MCF 10A (cell line): ENCODE measurements at regions of chr12 and their contacts with region 1.

Region 1: DNA sequence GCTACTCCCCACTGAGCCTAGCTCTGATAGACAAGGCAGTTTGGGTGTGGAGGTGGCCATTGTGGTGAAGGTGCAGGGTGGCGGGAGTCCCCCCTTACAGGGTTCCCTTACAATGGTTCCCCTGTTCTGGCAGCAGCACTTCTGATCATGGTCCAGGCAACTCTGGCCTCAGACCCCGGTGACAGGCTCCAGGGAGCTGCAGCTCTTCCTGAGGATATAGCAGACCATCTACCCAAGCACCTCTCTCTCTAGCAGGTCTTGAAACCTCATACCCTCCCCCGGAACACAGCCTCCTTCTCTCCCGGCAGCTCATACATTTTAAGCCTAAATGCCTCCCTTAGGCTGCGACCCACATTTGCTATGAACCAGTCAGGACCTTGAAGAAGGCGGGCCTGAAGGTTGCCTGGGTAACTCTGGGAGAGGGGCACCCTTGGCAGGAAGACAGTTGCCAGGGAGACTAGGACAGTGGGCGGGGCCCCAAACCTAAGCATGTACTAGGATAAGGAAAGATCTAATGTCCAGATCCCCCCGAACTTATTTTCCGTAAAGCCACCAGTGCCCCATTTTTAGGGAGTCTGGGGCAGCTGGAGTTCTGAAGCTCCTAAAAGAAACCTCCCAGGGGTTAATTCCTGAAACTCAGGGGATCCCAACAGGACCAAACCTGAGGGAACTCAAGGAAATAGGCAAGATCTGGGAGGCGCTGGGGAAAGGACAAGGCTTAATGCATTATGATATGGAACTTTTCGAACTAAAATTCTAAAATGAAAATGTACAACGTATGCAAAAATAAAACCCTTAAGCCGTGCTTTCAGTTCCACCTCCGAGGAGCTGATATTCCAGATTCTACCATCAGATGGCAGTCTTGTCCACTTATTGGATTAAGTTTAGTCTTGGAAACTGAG is 4.5 kb upstream of the GDF11 start:
- DNase-seq: peak; percentile 86
- H3K4me3 Mint-ChIP-seq: peak overlapping the region; percentile 74
- H3K27ac Mint-ChIP-seq: peak overlapping the region; percentile 73
- H3K4me1 Mint-ChIP-seq: peaks cover 38% of the 10 kb centered on the region
- H3K27me3 Mint-ChIP-seq: peaks cover 17% of the 10 kb centered on the region
- CTCF ChIP-seq: peak; percentile 78

Region 2: DNA sequence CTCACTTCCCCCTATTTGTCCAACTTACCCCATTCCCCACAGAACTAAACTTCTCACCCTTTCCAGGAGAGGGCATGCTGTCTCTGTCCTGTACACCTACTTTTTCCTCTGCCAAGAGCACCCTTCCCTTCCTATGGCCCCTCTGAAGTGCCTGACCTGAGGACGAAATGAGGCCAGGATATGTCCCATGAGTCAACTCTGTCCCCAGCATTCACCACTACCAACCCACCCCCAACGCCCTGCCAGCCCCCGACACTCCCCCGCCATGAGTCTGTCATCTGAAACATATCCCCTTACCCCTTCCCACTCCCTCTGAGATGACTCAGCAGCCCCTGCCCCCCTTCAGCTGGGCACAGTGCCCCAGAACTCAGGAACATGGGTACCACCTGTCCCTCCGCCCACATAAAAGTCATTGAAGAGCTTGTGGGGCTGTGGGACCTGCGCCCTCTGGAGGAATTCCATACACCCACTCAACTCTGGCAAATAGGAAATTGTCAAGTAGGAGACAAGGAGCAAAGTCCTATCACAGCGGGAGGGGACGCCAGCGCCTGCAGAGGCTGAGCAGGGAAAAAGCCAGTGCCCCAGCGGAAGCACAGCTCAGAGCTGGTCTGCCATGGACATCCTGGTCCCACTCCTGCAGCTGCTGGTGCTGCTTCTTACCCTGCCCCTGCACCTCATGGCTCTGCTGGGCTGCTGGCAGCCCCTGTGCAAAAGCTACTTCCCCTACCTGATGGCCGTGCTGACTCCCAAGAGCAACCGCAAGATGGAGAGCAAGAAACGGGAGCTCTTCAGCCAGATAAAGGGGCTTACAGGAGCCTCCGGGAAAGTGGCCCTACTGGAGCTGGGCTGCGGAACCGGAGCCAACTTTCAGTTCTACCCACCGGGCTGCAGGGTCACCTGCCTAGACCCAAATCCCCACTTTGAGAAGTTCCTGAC is 57.0 kb before region 1 on chr12:
- CTCF ChIA-PET with region 1: no interaction called
- POLR2A ChIA-PET with region 1: no interaction called
- intact Hi-C with region 1: loop called (anchors 2 kb)
- DNase-seq: peak; percentile 75
- H3K4me3 Mint-ChIP-seq: no peak overlapping the region
- H3K27ac Mint-ChIP-seq: no peak overlapping the region
- H3K4me1 Mint-ChIP-seq: peaks cover 9% of the 10 kb centered on the region
- H3K27me3 Mint-ChIP-seq: peaks cover 25% of the 10 kb centered on the region
- CTCF ChIP-seq: peak; percentile 37

Region 3: DNA sequence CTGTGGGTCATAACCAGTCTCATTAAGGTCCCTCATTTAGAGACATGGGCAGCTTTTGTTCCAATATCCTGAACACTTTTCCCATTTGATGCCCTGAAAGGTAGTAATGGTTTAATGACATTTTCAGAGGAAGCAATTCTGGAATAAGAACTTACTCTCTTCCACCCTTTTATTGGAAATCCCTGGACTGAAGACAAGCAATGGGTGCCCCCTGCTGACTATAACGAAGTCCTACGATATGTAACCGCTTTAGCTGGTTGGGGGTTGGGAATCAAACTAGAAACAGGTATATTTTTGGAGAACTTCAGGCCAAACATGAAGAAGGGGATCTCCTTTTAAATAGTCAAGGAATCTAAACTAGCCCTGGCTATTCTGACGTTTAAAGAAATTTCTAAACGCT is 58.7 kb after region 1 on chr12:
- CTCF ChIA-PET with region 1: interaction called, 16 read pairs
- POLR2A ChIA-PET with region 1: no interaction called
- intact Hi-C with region 1: loop called (anchors 2 kb)
- DNase-seq: peak; percentile 41
- H3K4me3 Mint-ChIP-seq: no peak overlapping the region
- H3K27ac Mint-ChIP-seq: no peak overlapping the region
- H3K4me1 Mint-ChIP-seq: peaks cover 4% of the 10 kb centered on the region
- H3K27me3 Mint-ChIP-seq: no peaks in the 10 kb centered on the region
- CTCF ChIP-seq: peak; percentile 13

Region 4: DNA sequence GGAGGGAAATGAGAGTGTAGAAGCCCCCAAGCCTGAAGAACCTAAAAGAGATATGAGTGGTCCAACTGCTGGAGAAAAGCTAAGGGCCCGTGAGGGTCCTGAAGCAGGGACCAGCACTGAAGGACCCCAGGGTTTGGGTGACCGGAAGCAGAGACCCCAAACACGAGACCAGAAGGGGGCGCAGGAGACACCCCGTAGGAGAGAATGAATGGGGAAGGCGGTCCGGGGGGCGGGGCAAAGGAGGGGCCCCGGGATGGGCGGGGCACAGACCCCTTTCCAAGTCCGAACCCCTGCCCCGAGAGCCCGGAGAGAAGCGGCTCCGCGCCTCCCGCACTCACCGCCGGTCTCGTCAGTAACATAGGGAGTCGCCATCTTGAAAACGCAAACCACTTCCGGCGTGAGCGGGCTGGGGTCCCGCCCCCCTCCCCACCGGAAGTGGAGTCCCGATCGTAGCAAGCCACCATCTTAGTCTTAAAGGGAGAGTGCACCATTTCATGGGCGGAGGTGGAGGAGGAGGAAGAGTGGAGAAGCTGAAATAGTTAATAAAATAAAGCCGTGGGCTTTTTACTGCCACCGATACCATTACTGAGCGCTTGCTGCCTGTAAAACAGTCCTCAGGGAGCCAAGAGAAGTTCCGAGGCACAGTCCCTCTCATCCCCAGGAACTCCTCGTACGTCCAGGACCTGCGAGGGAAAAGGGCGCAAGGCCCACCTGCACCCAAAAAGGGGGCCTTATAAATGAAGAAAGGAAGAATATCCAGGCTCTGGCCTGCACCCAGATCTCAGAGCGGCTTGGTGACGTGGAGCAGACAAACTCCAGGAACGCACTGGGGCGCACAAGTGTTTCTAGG is 188.6 kb after region 1 on chr12:
- CTCF ChIA-PET with region 1: interaction called, 4 read pairs
- POLR2A ChIA-PET with region 1: interaction called, 10 read pairs
- intact Hi-C with region 1: no loop called
- DNase-seq: peak; percentile 91
- H3K4me3 Mint-ChIP-seq: peak overlapping the region; percentile 95
- H3K27ac Mint-ChIP-seq: peak overlapping the region; percentile 93
- H3K4me1 Mint-ChIP-seq: peaks cover 38% of the 10 kb centered on the region
- H3K27me3 Mint-ChIP-seq: no peaks in the 10 kb centered on the region
- CTCF ChIP-seq: peak; percentile 85

Region 5: DNA sequence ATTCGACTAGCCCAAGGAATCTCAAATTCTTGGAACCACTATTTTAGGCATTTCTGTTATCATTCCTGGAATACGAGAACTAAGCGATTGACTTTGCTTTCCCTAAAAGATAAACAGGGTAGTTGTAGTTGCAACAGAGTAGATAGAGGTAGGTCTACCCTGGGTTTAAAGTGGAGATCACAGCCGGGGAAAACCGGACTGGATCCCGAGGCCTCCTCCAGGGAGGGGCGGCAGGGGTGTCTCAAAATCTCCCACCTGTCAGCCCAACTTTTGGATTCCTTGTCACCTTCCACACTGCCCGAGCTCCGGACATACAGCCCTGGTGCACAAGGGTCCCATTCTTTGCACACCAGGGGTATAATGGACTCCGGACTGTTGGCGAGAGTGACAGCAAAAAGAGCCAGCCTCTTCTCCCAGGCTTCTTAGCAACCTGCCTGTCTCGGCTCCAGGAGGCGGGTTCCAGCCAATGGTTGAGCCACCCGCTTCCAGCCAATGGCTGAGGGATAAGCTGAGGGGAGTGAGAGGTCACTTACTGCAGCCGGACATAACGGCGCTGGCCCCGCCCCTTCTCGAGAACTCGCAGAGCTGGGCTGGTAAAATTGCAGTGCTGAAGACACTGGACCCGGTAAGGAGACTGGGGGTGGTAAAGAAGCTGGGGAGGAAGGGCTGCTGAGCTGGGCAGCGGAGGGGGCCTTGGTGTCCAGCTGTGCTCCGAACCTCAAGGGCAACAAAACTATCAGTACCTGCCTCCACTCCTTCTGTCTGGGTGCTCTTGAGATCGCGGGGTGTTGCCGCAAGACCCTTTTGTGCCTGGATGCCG is 258.6 kb after region 1 on chr12 and contains the start of gene SUOX:
- CTCF ChIA-PET with region 1: interaction called, 10 read pairs
- POLR2A ChIA-PET with region 1: interaction called, 11 read pairs
- intact Hi-C with region 1: no loop called
- DNase-seq: peak; percentile 98
- H3K4me3 Mint-ChIP-seq: peak within 1 kb of the TSS; percentile 92
- H3K27ac Mint-ChIP-seq: peak within 1 kb of the TSS; percentile 28
- H3K4me1 Mint-ChIP-seq: peaks cover 12% of the 10 kb centered on the region
- H3K27me3 Mint-ChIP-seq: no peaks in the 10 kb centered on the region
- CTCF ChIP-seq: no peak
- total RNA-seq, gene SUOX: 6.3 and 7.9 TPM in 2 replicates

Region 6: DNA sequence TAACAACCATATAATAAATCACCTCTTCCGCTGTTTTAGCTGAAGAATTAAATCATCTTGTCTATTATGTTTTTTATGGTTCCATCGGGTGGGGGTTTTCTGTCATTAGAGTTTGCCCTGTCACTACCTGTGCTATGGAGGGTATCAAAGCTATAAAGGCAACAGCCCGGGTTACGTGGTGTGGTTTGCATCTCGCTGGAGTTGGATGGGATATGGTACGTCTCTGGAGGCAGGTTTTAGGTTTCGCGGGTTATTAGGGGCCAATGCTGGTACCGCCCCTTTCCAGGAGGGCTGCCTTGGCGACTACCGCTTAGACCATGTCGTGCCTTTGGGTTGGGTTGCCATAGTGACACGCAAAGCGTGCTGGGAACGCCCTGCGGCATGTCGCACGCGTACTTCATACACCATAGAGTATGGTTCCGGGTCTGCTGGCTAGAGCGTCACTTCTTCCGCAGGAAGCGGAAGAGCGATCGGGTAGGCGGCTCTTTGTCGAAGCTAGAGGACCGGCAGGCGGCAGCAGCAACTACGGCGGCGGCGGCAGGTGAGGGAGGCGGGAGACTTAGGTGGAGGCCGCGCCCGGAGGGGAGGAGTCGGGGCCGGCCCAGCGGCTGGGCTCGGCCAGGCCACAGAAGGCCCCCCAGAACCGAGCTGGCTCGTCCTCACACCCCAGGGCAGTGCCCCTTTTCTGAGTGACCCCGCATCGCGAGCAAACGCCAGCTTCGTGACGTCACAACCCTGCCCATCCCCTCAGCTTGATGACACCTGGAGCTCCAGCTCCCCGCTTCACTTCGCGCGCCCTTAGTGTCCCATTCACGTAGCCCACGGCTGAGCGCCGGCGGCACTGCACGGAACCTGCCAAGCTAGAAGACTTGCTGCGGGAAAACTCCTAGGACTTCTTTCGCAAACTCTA is 379.7 kb after region 1 on chr12 and contains the start of gene ZC3H10:
- CTCF ChIA-PET with region 1: interaction called, 6 read pairs
- POLR2A ChIA-PET with region 1: interaction called, 7 read pairs
- intact Hi-C with region 1: loop called (anchors 1 kb)
- DNase-seq: peak; percentile 99
- H3K4me3 Mint-ChIP-seq: peak within 1 kb of the TSS; percentile 95
- H3K27ac Mint-ChIP-seq: peak within 1 kb of the TSS; percentile 100
- H3K4me1 Mint-ChIP-seq: peaks cover 18% of the 10 kb centered on the region
- H3K27me3 Mint-ChIP-seq: no peaks in the 10 kb centered on the region
- CTCF ChIP-seq: peak; percentile 21
- total RNA-seq, gene ZC3H10: 2.8 and 3.5 TPM in 2 replicates